ENCODE measurements at regions of chrX and their contacts with region 1.

Region 1: GRCh38 chrX:136162831-136163570 is 15.7 kb downstream of the FHL1 start:
- DNase-seq: no peak
- ATAC-seq: peak; percentile 91
- H3K4me3 ChIP-seq: no peak overlapping the region
- H3K27ac ChIP-seq: no peak overlapping the region
- H3K4me1 ChIP-seq: no peaks in the 10 kb centered on the region
- H3K27me3 ChIP-seq: no peaks in the 10 kb centered on the region
- CTCF ChIP-seq: peak; percentile 67 to 77 (median 69)
- EP300 ChIP-seq: no peak
- POLR2A ChIP-seq: no peak
- RAD21 ChIP-seq: peak; percentile 72

Region 2: GRCh38 chrX:136028251-136028984 is 134.6 kb before region 1 on chrX:
- CTCF ChIA-PET with region 1: interaction called, 68 read pairs
- POLR2A ChIA-PET with region 1: interaction called, 3 read pairs
- RAD21 ChIA-PET with region 1: interaction called, 37 read pairs
- SMC1A ChIA-PET with region 1: interaction called, 42 read pairs
- in situ Hi-C with region 1: no loop called
- intact Hi-C with region 1: loop called (anchors 1 kb)
- DNase-seq: no peak
- ATAC-seq: peak; percentile 81
- H3K4me3 ChIP-seq: no peak overlapping the region
- H3K27ac ChIP-seq: no peak overlapping the region
- H3K4me1 ChIP-seq: no peaks in the 10 kb centered on the region
- H3K27me3 ChIP-seq: no peaks in the 10 kb centered on the region
- CTCF ChIP-seq: peak; percentile 44 to 64 (median 62); a peak in 5 of 6 replicates
- EP300 ChIP-seq: no peak
- POLR2A ChIP-seq: no peak
- RAD21 ChIP-seq: peak; percentile 82

Region 3: DNA sequence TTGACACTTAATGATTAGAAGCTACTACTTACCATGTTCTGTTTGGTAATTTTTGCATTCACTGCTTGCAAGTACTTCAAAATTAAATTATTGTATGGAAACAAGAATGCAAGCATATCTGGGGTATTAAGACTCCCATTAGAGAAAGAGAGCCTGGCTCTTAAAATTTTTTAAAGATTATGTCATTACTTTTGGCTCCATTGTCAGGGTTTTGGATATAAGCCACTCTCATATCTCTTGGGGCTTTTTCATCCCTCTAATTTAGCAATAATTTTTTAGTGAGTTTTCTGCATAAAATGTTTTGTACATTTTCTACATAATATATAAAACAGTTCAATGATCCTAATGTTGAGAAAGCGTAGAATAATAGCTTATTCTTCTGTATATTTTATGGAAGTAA is 128.3 kb before region 1 on chrX:
- CTCF ChIA-PET with region 1: interaction called, 68 read pairs
- POLR2A ChIA-PET with region 1: no interaction called
- RAD21 ChIA-PET with region 1: interaction called, 37 read pairs
- SMC1A ChIA-PET with region 1: interaction called, 42 read pairs
- in situ Hi-C with region 1: no loop called
- intact Hi-C with region 1: no loop called
- DNase-seq: no peak
- ATAC-seq: no peak
- H3K4me3 ChIP-seq: no peak overlapping the region
- H3K27ac ChIP-seq: no peak overlapping the region
- H3K4me1 ChIP-seq: no peaks in the 10 kb centered on the region
- H3K27me3 ChIP-seq: no peaks in the 10 kb centered on the region
- CTCF ChIP-seq: no peak
- EP300 ChIP-seq: no peak
- POLR2A ChIP-seq: no peak
- RAD21 ChIP-seq: no peak

Measured in GM12878 (cell line).